ENCODE measurements at regions of chr1 and their contacts with region 1.

Region 1: DNA sequence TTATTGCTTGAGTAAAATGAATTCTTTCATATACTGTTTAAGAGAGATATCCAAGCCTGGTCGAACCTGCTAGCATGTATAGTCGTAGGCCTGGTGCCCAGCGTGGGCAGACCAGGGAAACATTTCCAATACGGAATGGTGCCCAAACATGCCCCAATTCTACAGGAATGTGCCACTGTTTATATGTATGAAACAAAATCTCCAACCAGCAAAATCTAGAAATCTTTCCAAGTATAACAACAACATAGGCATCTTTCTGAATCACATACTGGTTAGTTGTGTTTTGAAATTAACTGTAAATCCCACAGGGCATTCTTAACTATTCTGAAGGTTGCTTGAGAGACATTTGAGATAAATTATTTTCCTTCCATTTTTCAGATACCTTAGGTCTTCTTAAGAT is 17.0 kb upstream of the ABCD3 start:
- DNase-seq: no peak
- H3K4me3 Mint-ChIP-seq: no peak overlapping the region
- H3K27ac Mint-ChIP-seq: no peak overlapping the region
- H3K4me1 Mint-ChIP-seq: no peaks in the 10 kb centered on the region
- H3K27me3 Mint-ChIP-seq: no peaks in the 10 kb centered on the region
- CTCF ChIP-seq: no peak

Region 2: DNA sequence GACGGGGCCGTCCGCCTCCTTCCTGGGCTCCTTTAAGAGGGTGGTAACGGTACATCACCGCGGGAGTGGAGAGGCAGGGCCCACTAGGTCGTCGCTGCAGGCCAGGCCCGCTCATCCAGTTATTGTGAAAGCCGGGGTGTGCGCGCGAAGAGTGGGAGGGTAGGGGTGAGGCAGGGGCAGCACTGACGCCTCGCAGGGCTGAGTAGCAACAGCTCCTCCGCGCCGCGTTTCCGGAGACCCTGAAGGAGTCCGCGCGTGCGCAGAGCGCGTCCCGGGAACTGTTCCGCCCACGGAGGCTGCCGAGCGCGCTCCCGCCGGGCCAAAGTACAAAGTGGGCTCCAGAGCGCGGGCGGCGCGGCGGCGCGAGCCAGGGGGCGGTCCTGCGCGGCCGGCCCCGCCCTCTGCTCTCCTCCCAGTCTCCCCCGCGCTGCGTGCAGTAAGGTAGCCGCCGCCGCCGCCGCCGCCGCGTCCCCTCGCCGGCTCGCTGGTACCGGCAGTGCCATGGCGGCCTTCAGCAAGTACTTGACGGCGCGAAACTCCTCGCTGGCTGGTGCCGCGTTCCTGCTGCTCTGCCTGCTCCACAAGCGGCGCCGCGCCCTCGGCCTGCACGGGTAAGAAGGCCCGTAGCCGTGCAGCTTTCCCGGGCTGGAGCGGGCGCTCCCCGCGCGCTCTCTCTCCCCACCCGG is 16.9 kb after region 1 on chr1 and contains the start of gene ABCD3:
- CTCF ChIA-PET with region 1: interaction called, 4 read pairs
- POLR2A ChIA-PET with region 1: interaction called, 11 read pairs
- intact Hi-C with region 1: no loop called
- DNase-seq: peak; percentile 94
- H3K4me3 Mint-ChIP-seq: no peak within 1 kb of the TSS
- H3K27ac Mint-ChIP-seq: no peak within 1 kb of the TSS
- H3K4me1 Mint-ChIP-seq: peaks cover 38% of the 10 kb centered on the region
- H3K27me3 Mint-ChIP-seq: peaks cover 11% of the 10 kb centered on the region
- CTCF ChIP-seq: no peak
- total RNA-seq, gene ABCD3: 26.5 and 32.5 TPM in 2 replicates

Region 3: GRCh38 chr1:94456736-94457135 is 55.5 kb after region 1 on chr1:
- CTCF ChIA-PET with region 1: no interaction called
- POLR2A ChIA-PET with region 1: no interaction called
- intact Hi-C with region 1: no loop called
- DNase-seq: no peak
- H3K4me3 Mint-ChIP-seq: no peak overlapping the region
- H3K27ac Mint-ChIP-seq: no peak overlapping the region
- H3K4me1 Mint-ChIP-seq: no peaks in the 10 kb centered on the region
- H3K27me3 Mint-ChIP-seq: no peaks in the 10 kb centered on the region
- CTCF ChIP-seq: no peak

Measured in MCF 10A (cell line).